Right cardiac atrium (tissue), 5 donors: ENCODE measurements at regions of chr7 and their contacts with region 1.

Region 1: GRCh38 chr7:77989981-77990566 is 191.5 kb downstream of the PHTF2 start:
- DNase-seq: no peak
- ATAC-seq: no peak
- H3K4me3 ChIP-seq: no peak overlapping the region
- H3K27ac ChIP-seq: no peak overlapping the region
- H3K4me1 ChIP-seq: no peaks in the 10 kb centered on the region
- H3K27me3 ChIP-seq: no peaks in the 10 kb centered on the region

Region 2: DNA sequence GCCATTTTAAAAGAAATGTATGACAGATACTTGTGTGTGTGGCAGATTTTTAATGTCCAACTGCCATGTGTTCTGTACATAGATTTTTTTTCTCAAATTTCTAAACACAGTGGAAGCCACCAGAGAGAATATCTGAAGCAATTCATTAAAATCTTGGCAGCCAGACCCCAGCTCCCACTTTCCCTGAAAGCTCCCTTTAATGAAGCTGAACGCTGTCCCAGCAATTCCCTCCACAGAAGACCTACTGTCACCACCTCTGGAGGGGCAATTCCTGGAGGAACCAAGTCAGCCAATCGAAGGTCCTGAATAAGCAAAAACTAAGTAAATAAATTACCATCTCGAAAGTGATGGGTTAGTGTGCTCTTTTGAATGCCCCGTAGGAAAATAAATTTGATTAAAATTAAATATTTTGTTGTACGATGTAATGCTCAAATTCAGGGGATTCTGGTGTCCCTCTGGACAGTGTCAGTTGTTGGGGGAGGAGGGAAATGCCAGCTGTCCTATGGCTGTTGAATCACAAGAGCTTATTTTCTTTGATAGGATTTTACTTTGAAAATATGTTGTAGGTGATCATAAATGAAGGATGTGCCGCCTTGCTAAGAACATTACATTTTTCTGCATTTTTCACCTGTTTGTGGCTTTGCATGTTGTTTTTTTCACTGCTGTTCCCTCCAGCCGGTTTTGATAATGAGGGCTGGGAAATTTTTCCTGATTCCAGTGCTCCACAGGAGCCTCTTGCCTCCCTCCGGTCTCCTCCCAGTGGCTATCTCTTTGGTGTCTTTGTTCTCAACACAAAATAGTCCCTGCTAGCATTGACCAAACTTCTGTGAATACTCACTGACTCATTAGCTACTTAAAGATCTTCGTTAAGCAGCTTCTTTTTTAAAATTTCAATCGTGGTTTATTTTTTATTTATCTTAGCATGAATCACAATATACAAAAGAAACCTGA is 564.7 kb before region 1 on chr7:
- intact Hi-C with region 1: no loop called
- DNase-seq: no peak
- ATAC-seq: peak; percentile 48 to 56
- H3K4me3 ChIP-seq: no peak overlapping the region
- H3K27ac ChIP-seq: no peak overlapping the region
- H3K4me1 ChIP-seq: no peaks in the 10 kb centered on the region
- H3K27me3 ChIP-seq: no peaks in the 10 kb centered on the region

Region 3: GRCh38 chr7:77910124-77910523 is 80.0 kb before region 1 on chr7:
- intact Hi-C with region 1: no loop called
- DNase-seq: no peak
- ATAC-seq: no peak
- H3K4me3 ChIP-seq: no peak overlapping the region
- H3K27ac ChIP-seq: no peak overlapping the region
- H3K4me1 ChIP-seq: no peaks in the 10 kb centered on the region
- H3K27me3 ChIP-seq: no peaks in the 10 kb centered on the region

Region 4: DNA sequence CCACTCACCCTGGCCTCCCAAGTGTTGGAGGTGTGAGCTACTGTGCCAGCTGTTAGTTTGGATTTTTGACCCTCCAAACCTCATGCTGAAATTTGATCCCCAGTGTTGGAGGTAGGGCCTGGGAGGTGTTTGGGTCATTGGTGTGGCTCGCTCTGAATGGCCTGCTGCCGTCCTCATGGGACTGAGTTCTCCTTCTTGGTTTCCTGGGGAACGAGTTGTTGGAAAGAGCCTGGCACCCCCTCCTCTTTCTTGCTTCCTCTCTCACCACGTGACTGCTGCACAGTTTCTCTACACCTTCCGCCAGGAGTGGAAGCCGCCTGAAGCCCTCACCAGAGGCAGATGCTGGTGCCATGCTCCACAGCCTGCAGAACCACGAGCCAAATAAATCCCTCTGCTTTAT is 62.0 kb after region 1 on chr7:
- intact Hi-C with region 1: loop called in 1 of 4 experiments (anchors 10 kb)
- DNase-seq: no peak
- ATAC-seq: no peak
- H3K4me3 ChIP-seq: no peak overlapping the region
- H3K27ac ChIP-seq: no peak overlapping the region
- H3K4me1 ChIP-seq: no peaks in the 10 kb centered on the region
- H3K27me3 ChIP-seq: no peaks in the 10 kb centered on the region